ENCODE measurements at regions of chr17 and their contacts with region 1.

Region 1: GRCh38 chr17:4215882-4216570 is 47.8 kb downstream of the ANKFY1 start:
- DNase-seq: no peak
- ATAC-seq: no peak

Region 2: GRCh38 chr17:4074831-4075495 is 141.1 kb before region 1 on chr17:
- intact Hi-C with region 1: no loop called
- DNase-seq: no peak
- ATAC-seq: peak; percentile 42

Region 3: DNA sequence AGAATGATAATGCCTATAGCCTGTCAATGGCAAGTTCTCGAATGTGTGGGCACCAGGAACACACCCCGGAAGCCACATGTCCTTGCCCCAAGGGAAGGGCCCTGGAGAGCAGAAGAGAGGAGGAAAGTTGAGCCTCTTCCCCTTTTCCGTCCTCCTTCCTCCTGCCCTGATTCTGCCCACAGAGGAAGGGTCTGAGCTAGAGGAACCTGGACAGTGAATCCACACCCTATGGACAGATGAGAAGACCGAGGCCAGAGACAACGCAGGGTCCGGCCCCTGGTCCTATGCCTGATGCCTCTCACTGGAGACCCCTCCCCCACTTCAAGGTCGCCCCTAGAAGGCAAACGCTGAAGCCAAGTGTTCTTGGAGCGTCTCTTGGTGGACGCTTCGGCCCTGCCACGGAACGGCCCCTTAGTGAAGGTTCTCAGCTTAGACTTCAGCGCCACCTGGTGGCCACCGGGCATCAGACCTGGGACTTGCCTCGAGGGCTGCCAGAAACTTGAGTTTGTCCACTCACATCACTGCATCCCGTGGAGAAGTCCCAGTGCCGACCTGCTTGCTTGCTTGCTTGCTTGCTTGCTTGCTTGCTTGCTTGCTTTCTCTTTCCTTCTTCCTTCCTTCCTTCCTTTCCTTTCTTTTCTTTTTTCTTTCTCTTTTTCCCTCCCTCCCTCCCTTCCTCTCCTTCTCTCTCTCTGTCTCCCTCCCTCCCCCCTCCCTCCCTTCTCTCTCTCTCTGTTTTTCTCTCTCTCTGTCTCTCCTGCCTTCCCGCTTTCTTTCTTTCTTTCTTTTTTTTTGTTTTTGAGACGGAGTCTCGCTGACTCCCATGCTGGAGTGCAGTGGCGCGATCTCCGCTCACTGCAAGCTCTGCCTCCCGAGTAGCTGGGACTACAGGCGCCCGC is 197.2 kb after region 1 on chr17:
- intact Hi-C with region 1: loop called (anchors 5 kb)
- DNase-seq: peak; percentile 98
- ATAC-seq: peak; percentile 97